ENCODE measurements at regions of chr18 and their contacts with region 1.

Region 1: GRCh38 chr18:1464444-1465217 is 560.0 kb downstream of the ADCYAP1 start:
- DNase-seq: no peak
- H3K4me3 ChIP-seq: no peak overlapping the region
- H3K27ac ChIP-seq: no peak overlapping the region
- H3K4me1 ChIP-seq: no peaks in the 10 kb centered on the region
- H3K27me3 ChIP-seq: no peaks in the 10 kb centered on the region
- CTCF ChIP-seq: no peak

Region 2: GRCh38 chr18:1487457-1487856 is 22.8 kb after region 1 on chr18:
- intact Hi-C with region 1: loop called (anchors 2 kb)
- DNase-seq: no peak
- H3K4me3 ChIP-seq: no peak overlapping the region
- H3K27ac ChIP-seq: no peak overlapping the region
- H3K4me1 ChIP-seq: no peaks in the 10 kb centered on the region
- H3K27me3 ChIP-seq: no peaks in the 10 kb centered on the region
- CTCF ChIP-seq: no peak

Region 3: GRCh38 chr18:1559563-1559962 is 94.9 kb after region 1 on chr18:
- intact Hi-C with region 1: no loop called
- DNase-seq: no peak
- H3K4me3 ChIP-seq: no peak overlapping the region
- H3K27ac ChIP-seq: no peak overlapping the region
- H3K4me1 ChIP-seq: no peaks in the 10 kb centered on the region
- H3K27me3 ChIP-seq: no peaks in the 10 kb centered on the region
- CTCF ChIP-seq: no peak

Measured in ascending aorta (tissue), 2 donors.